ENCODE measurements at regions of chr4 and their contacts with region 1.

Region 1: DNA sequence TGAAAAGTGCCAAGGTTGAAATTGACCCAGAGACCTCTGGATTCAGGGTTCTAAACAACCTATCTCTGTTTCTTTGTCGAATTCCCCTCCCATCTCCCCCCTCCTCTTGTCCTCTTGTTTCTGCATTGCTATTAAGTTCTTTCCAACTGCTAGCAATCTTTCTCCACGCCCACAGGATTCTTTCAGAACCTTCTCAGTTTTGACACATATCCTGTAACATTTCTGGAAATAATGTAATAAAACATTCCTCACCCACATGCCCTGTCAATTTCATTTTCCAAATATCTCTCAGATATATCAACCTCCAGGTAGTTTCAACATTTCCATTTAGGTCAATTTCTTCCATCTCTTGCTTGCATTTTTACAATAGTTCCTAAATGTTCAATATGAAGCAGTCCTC is 1105.9 kb downstream of the ARAP2 start:
- DNase-seq: no peak
- H3K4me3 ChIP-seq: no peak overlapping the region
- H3K27ac ChIP-seq: no peak overlapping the region
- H3K4me1 ChIP-seq: no peaks in the 10 kb centered on the region
- H3K27me3 ChIP-seq: no peaks in the 10 kb centered on the region
- CTCF ChIP-seq: no peak
- EP300 ChIP-seq: no peak
- POLR2A ChIP-seq: no peak

Region 2: GRCh38 chr4:35342833-35343232 is 204.4 kb after region 1 on chr4:
- in situ Hi-C with region 1: no loop called
- intact Hi-C with region 1: loop called (anchors 2 kb)
- DNase-seq: no peak
- H3K4me3 ChIP-seq: no peak overlapping the region
- H3K27ac ChIP-seq: no peak overlapping the region
- H3K4me1 ChIP-seq: no peaks in the 10 kb centered on the region
- H3K27me3 ChIP-seq: no peaks in the 10 kb centered on the region
- CTCF ChIP-seq: no peak
- EP300 ChIP-seq: no peak
- POLR2A ChIP-seq: no peak

Measured in transverse colon (tissue), 4 donors.